Heart right ventricle (tissue), 16 donors: ENCODE measurements at regions of chr15 and their contacts with region 1.

Region 1: GRCh38 chr15:63188926-63189871 is at the start of gene RAB8B:
- DNase-seq: peak; percentile 98 to 99
- ATAC-seq: peak; percentile 99 to 100 (median 99)
- H3K4me3 ChIP-seq: peak within 1 kb of the TSS; percentile 53 to 70 (median 66)
- H3K27ac ChIP-seq: peak within 1 kb of the TSS in 9 of 10 donors; percentile 34 to 92 (median 77)
- H3K4me1 ChIP-seq: peaks cover 5 to 52% (median 26%) of the 10 kb centered on the region in 9 donors
- H3K27me3 ChIP-seq: no peaks in the 10 kb centered on the region
- CTCF ChIP-seq: peak in 1 of 9 donors; percentile 6
- total RNA-seq, gene RAB8B: 6.0 to 27.7 (median 7.4) TPM

Region 2: DNA sequence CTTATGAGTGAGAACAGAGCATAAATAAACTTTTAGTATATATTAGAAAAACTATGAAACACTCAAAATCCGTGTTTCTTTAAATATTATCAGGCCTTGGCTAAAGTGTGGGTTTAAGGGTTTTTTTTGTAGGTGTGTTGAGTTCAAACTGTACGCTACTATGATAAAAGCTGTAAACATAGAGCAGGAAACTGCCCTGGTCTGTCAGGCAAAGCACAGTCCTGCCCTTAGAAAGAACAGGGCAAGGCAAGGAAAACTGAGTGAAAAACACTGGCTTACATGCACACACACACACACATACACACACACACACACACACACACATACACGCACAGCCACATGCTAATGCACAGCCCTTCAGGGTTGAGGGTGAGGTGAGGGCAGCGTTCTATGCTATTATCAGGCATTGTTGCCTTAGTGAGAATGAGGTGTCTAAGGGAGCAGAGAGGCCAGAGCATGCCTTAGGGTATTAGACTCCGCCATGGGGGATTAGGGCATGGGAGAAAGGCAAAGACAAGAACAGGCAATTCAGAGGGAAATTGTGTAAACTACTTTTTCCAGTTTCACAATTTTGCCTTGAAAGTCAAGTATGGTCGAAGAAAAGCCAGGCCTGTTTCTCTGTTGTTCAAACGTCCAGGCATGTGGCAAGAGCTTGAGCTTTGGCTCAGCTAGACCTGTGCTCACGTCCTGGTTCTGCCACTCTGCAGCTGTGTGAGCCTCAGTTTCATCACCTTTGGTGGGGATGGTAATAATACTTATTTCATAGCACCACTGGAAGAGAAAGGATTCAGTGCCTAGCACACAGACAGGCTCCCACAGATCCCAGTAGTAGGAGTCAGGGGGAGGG is 182.9 kb before region 1 on chr15:
- intact Hi-C with region 1: no loop called
- DNase-seq: no peak
- ATAC-seq: peak in 6 of 8 donors; percentile 49 to 81 (median 66)
- H3K4me3 ChIP-seq: no peak overlapping the region
- H3K27ac ChIP-seq: no peak overlapping the region
- H3K4me1 ChIP-seq: peaks cover 0 to 7% (median 0%) of the 10 kb centered on the region in 9 donors
- H3K27me3 ChIP-seq: no peaks in the 10 kb centered on the region
- CTCF ChIP-seq: no peak

Region 3: DNA sequence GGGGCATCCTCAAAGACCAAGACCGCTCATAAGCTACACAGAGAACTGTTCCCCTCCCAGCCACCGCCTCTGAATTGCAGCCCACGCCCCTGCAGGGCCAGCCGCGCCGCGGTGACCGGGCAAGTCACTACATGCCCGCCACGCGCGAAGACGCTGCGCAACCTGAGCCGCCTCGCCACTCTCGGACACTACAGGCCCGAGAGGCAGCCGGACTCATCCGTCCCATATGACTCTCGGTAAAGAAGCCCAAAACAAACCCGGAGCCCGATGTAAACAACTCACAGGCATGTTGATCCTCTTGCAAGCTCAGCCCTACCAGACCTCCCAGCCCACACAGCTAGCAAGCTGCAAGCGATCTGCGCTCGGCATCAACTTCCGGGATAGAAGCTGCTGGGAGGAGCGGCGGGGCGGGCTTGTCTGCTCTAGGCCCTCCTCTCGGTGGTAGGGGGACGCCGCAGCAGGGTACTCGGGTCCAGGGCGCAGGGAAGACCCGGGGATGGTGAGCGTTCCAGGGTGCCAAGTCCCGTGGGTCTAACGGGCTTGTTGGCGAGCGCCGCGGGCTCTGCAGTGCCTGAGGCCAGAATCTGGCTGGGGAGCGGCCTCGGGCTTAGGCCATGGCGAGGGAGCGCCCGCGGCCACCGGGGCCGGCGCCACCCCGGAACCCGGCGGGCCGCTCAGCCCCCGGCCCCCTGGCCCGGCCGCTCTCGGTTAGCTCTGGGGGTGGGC is 31.9 kb before region 1 on chr15 and contains the start of gene RPS27L:
- intact Hi-C with region 1: loop called in 2 of 10 experiments (anchors 2 kb)
- DNase-seq: peak; percentile 90 to 93
- ATAC-seq: peak; percentile 96 to 99 (median 98)
- H3K4me3 ChIP-seq: peak within 1 kb of the TSS; percentile 56 to 99 (median 82)
- H3K27ac ChIP-seq: peak within 1 kb of the TSS; percentile 87 to 99 (median 97)
- H3K4me1 ChIP-seq: peaks cover 5 to 37% (median 26%) of the 10 kb centered on the region in 9 donors
- H3K27me3 ChIP-seq: no peaks in the 10 kb centered on the region
- CTCF ChIP-seq: no peak
- total RNA-seq, gene RPS27L: 117 to 177 (median 145) TPM

Region 4: GRCh38 chr15:63172376-63173109 is 16.7 kb before region 1 on chr15:
- intact Hi-C with region 1: no loop called
- DNase-seq: no peak
- ATAC-seq: no peak
- H3K4me3 ChIP-seq: no peak overlapping the region
- H3K27ac ChIP-seq: no peak overlapping the region
- H3K4me1 ChIP-seq: peaks cover 0 to 5% (median 0%) of the 10 kb centered on the region in 9 donors
- H3K27me3 ChIP-seq: no peaks in the 10 kb centered on the region
- CTCF ChIP-seq: no peak

Region 5: GRCh38 chr15:63226966-63227401 is 37.8 kb after region 1 on chr15:
- intact Hi-C with region 1: loop called in 2 of 10 experiments (anchors 5 kb)
- DNase-seq: no peak
- ATAC-seq: no peak
- H3K4me3 ChIP-seq: no peak overlapping the region
- H3K27ac ChIP-seq: peak overlapping the region in 1 of 10 donors; percentile 59
- H3K4me1 ChIP-seq: peaks cover 0 to 60% (median 7%) of the 10 kb centered on the region in 9 donors
- H3K27me3 ChIP-seq: no peaks in the 10 kb centered on the region
- CTCF ChIP-seq: no peak

Region 6: GRCh38 chr15:63246691-63247464 is 57.7 kb after region 1 on chr15:
- intact Hi-C with region 1: loop called in 1 of 10 experiments (anchors 10 kb)
- DNase-seq: no peak
- ATAC-seq: peak in 5 of 8 donors; percentile 14 to 86 (median 56)
- H3K4me3 ChIP-seq: no peak overlapping the region
- H3K27ac ChIP-seq: peak overlapping the region in 2 of 10 donors; percentile 29 to 75
- H3K4me1 ChIP-seq: peaks cover 0 to 55% (median 26%) of the 10 kb centered on the region in 9 donors
- H3K27me3 ChIP-seq: no peaks in the 10 kb centered on the region
- CTCF ChIP-seq: no peak

Region 7: DNA sequence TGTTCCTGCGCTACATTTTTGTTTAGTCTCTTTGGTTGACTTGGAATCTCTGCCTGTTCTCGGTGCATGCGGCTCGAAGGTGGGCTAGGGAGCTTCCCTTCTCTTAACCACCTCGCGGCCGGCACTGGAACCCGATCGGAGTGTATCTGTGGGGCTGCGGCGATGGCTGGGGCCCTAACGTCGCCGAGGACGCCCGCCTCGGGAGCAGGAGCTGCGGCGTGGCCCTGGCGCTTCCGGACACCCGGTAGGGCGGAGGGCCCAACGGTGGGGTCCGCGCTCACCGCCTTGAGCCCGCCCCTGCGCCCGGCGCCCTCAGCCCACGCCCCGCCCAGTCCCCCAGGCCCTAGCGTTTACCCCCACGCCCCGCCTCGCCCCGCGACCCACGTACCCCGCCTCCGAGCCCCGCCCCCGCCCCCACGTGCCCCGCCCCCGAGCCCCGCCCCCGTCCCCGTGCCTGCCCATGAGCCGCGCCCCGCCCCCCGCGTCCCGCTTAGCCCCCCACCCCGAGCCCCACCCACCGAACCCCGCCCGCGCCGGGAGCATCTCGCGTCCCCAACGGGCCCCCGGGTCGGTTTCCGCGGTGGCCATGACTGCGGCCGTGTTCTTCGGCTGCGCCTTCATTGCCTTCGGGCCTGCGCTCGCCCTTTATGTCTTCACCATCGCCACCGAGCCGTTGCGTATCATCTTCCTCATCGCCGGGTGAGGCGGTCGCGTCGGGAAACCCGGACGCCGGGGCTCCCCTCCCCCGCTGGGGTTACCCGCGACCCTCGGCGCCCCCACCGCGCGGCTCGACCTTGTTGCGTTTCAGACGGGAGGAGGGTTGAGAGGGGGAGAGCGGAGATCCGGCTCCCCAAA is 88.1 kb after region 1 on chr15 and contains the start of gene APH1B:
- intact Hi-C with region 1: loop called in 4 of 10 experiments (anchors 5 to 10 kb)
- DNase-seq: peak; percentile 80 to 90
- ATAC-seq: peak; percentile 87 to 98 (median 92)
- H3K4me3 ChIP-seq: peak within 1 kb of the TSS; percentile 68 to 93 (median 84)
- H3K27ac ChIP-seq: peak within 1 kb of the TSS; percentile 22 to 92 (median 86)
- H3K4me1 ChIP-seq: peaks cover 0 to 31% (median 9%) of the 10 kb centered on the region in 9 donors
- H3K27me3 ChIP-seq: no peaks in the 10 kb centered on the region
- CTCF ChIP-seq: no peak
- total RNA-seq, gene APH1B: 4.8 to 11.4 (median 8.4) TPM